CD8-positive, alpha-beta T cell (primary cell): ENCODE measurements at regions of chr1 and their contacts with region 1.

Region 1: GRCh38 chr1:165392634-165393571 is 36.4 kb upstream of the LMX1A start:
- DNase-seq: peak; percentile 81 to 95 (median 90)
- ATAC-seq: peak; percentile 99
- H3K4me3 ChIP-seq: no peak overlapping the region
- H3K4me3 Mint-ChIP-seq: peak overlapping the region; percentile 43
- H3K27ac ChIP-seq: no peak overlapping the region
- H3K27ac Mint-ChIP-seq: peak overlapping the region; percentile 64
- H3K4me1 ChIP-seq: peaks cover 15% of the 10 kb centered on the region
- H3K4me1 Mint-ChIP-seq: peaks cover 16% of the 10 kb centered on the region
- H3K27me3 ChIP-seq: peaks cover 8 to 13% of the 10 kb centered on the region in 2 experiments
- H3K27me3 Mint-ChIP-seq: peaks cover 62% of the 10 kb centered on the region
- CTCF ChIP-seq: peak; percentile 92

Region 2: DNA sequence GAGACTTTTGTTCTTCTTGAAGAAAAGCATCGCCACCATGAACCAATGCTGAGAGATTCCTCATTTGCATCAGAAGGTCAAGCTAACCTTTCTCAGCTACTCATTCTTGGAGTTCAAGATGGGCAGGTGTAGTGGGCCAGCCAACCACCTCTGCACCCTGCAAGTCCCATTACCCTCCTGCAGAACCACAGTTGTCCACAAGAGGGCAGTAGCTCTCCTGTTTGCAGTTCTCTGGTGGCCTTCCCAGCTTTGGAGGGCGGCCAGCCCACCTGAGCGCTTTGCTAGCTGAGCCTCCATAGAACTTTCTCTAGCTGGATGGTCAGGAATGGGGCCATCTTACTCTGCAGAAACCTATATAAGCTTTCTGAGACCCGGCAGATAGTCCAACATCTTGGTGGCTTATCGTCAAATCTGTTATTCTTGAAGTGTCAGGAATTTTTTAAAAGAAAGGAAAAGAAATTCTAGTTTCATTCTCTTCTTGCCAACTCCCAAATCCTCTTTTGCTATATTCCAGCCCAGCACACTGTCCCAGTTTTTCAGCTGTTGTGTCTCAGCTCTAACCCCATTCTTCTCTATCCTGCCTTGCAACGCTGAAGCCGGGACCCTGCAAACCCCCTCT is 25.4 kb before region 1 on chr1:
- CTCF ChIA-PET with region 1: interaction called, 47 read pairs
- POLR2A ChIA-PET with region 1: no interaction called
- intact Hi-C with region 1: no loop called
- DNase-seq: peak; percentile 62 to 84 (median 77)
- ATAC-seq: peak; percentile 71
- H3K4me3 ChIP-seq: no peak overlapping the region
- H3K4me3 Mint-ChIP-seq: no peak overlapping the region
- H3K27ac ChIP-seq: no peak overlapping the region
- H3K27ac Mint-ChIP-seq: no peak overlapping the region
- H3K4me1 ChIP-seq: no peaks in the 10 kb centered on the region
- H3K4me1 Mint-ChIP-seq: no peaks in the 10 kb centered on the region
- H3K27me3 ChIP-seq: no peaks in the 10 kb centered on the region
- H3K27me3 Mint-ChIP-seq: peaks cover 60% of the 10 kb centered on the region
- CTCF ChIP-seq: peak; percentile 93

Region 3: GRCh38 chr1:165605246-165605645 is 212.3 kb after region 1 on chr1:
- CTCF ChIA-PET with region 1: interaction called, 243 read pairs
- POLR2A ChIA-PET with region 1: no interaction called
- intact Hi-C with region 1: no loop called
- DNase-seq: no peak
- ATAC-seq: no peak
- H3K4me3 ChIP-seq: no peak overlapping the region
- H3K4me3 Mint-ChIP-seq: no peak overlapping the region
- H3K27ac ChIP-seq: no peak overlapping the region
- H3K27ac Mint-ChIP-seq: no peak overlapping the region
- H3K4me1 ChIP-seq: no peaks in the 10 kb centered on the region
- H3K4me1 Mint-ChIP-seq: peaks cover 4% of the 10 kb centered on the region
- H3K27me3 ChIP-seq: no peaks in the 10 kb centered on the region
- H3K27me3 Mint-ChIP-seq: peaks cover 7% of the 10 kb centered on the region
- CTCF ChIP-seq: no peak

Region 4: GRCh38 chr1:165697881-165698760 is 305.2 kb after region 1 on chr1 and contains the start of gene ALDH9A1:
- CTCF ChIA-PET with region 1: no interaction called
- POLR2A ChIA-PET with region 1: no interaction called
- intact Hi-C with region 1: loop called in 1 of 2 experiments (anchors 10 kb)
- DNase-seq: peak; percentile 74 to 90 (median 82)
- ATAC-seq: peak; percentile 87
- H3K4me3 ChIP-seq: peak within 1 kb of the TSS; percentile 65 to 87
- H3K4me3 Mint-ChIP-seq: peak within 1 kb of the TSS; percentile 98
- H3K27ac ChIP-seq: peak within 1 kb of the TSS; percentile 80 to 91
- H3K27ac Mint-ChIP-seq: peak within 1 kb of the TSS; percentile 95
- H3K4me1 ChIP-seq: peaks cover 25% of the 10 kb centered on the region
- H3K4me1 Mint-ChIP-seq: peaks cover 39% of the 10 kb centered on the region
- H3K27me3 ChIP-seq: peaks cover 0 to under 1% of the 10 kb centered on the region in 2 experiments
- H3K27me3 Mint-ChIP-seq: peaks cover 2% of the 10 kb centered on the region
- CTCF ChIP-seq: no peak
- total RNA-seq, gene ALDH9A1: 18.7 to 22.0 TPM

Region 5: GRCh38 chr1:166479052-166479631 is 1086.2 kb after region 1 on chr1:
- CTCF ChIA-PET with region 1: no interaction called
- POLR2A ChIA-PET with region 1: no interaction called
- intact Hi-C with region 1: loop called in 1 of 2 experiments (anchors 2 kb)
- DNase-seq: peak in 8 of 9 experiments; percentile 4 to 62 (median 38)
- ATAC-seq: peak; percentile 34
- H3K4me3 ChIP-seq: no peak overlapping the region
- H3K4me3 Mint-ChIP-seq: no peak overlapping the region
- H3K27ac ChIP-seq: no peak overlapping the region
- H3K27ac Mint-ChIP-seq: no peak overlapping the region
- H3K4me1 ChIP-seq: no peaks in the 10 kb centered on the region
- H3K4me1 Mint-ChIP-seq: no peaks in the 10 kb centered on the region
- H3K27me3 ChIP-seq: no peaks in the 10 kb centered on the region
- H3K27me3 Mint-ChIP-seq: no peaks in the 10 kb centered on the region
- CTCF ChIP-seq: peak; percentile 86

Region 6: DNA sequence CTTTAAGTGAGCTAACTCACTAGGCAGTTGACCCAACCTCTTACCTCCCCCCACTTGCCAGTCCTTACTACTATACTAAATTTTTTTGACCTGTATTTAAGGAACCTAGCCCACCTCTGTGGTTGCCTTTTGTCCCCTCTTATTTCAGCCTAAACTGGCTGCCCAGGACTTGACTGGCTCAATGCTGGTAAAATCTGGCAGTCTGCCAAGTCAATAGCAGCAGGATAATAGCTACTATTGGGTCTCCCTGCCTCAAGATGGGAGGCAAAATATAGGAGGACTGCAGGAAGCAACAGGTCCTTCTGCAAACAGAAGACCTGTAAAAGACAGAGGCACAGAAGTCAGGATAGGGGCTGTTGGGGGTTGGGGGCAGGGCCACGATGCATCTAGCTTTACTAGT is 1302.2 kb after region 1 on chr1:
- CTCF ChIA-PET with region 1: no interaction called
- POLR2A ChIA-PET with region 1: no interaction called
- intact Hi-C with region 1: no loop called
- DNase-seq: no peak
- ATAC-seq: no peak
- H3K4me3 ChIP-seq: no peak overlapping the region
- H3K4me3 Mint-ChIP-seq: no peak overlapping the region
- H3K27ac ChIP-seq: no peak overlapping the region
- H3K27ac Mint-ChIP-seq: no peak overlapping the region
- H3K4me1 ChIP-seq: no peaks in the 10 kb centered on the region
- H3K4me1 Mint-ChIP-seq: no peaks in the 10 kb centered on the region
- H3K27me3 ChIP-seq: peaks cover 0 to 3% of the 10 kb centered on the region in 2 experiments
- H3K27me3 Mint-ChIP-seq: peaks cover 28% of the 10 kb centered on the region
- CTCF ChIP-seq: no peak